Gastrocnemius medialis (tissue), 4 donors: ENCODE measurements at regions of chr22 and their contacts with region 1.

Region 1: DNA sequence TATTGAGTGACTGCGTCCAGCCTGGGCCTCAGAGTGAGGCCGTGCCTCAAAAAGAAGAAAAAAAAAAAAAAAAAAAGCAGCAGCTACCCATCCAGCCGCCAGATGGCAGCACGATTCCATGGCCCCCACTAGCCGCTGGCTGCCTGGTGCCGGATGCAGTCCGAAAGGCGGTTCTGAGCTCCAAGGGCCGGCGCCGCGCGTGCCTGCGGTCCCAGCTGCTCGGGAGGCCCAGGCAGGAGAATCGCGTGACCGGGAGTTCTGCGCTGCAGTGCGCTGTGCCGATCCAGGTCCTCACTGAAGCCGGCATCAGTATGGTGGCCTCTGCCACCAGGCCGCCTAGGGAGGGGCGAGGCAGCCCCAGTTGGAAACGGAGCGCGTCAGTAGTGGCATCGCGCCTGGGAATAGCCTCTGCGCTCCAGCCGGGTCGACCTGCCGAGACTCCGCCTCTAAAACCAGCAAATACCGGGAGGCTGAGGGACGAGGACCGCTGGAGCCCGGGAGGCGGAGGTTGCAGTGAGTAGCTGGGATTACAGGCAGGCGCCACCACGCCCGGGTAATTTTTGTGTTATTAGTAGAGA is 19.3 kb downstream of the SCARF2 start:
- DNase-seq: peak; percentile 66 to 71
- ATAC-seq: peak; percentile 78 to 83
- H3K4me3 ChIP-seq: peak overlapping the region; percentile 40 to 63 (median 46)
- H3K27ac ChIP-seq: peak overlapping the region in 2 of 4 donors; percentile 34 to 50
- H3K4me1 ChIP-seq: peaks cover 0 to 7% of the 10 kb centered on the region in 2 donors
- H3K27me3 ChIP-seq: no peaks in the 10 kb centered on the region
- CTCF ChIP-seq: peak; percentile 64 to 92 (median 88)
- POLR2A ChIP-seq: no peak

Region 2: GRCh38 chr22:20247010-20247505 is 171.2 kb before region 1 on chr22:
- in situ Hi-C with region 1: no loop called
- intact Hi-C with region 1: no loop called
- DNase-seq: peak in 1 of 2 donors; percentile 20
- ATAC-seq: peak in 1 of 2 donors; percentile 52
- H3K4me3 ChIP-seq: no peak overlapping the region
- H3K27ac ChIP-seq: no peak overlapping the region
- H3K4me1 ChIP-seq: peaks cover 5 to 9% of the 10 kb centered on the region in 2 donors
- H3K27me3 ChIP-seq: no peaks in the 10 kb centered on the region
- CTCF ChIP-seq: no peak
- POLR2A ChIP-seq: no peak

Region 3: GRCh38 chr22:20456064-20456721 is 37.9 kb after region 1 on chr22:
- in situ Hi-C with region 1: loop called in 2 of 4 experiments (anchors 5 to 10 kb)
- intact Hi-C with region 1: loop called (anchors 5 kb)
- DNase-seq: peak; percentile 37 to 62
- ATAC-seq: peak; percentile 67 to 85
- H3K4me3 ChIP-seq: no peak overlapping the region
- H3K27ac ChIP-seq: no peak overlapping the region
- H3K4me1 ChIP-seq: no peaks in the 10 kb centered on the region
- H3K27me3 ChIP-seq: no peaks in the 10 kb centered on the region
- CTCF ChIP-seq: peak; percentile 52 to 82 (median 77)
- POLR2A ChIP-seq: no peak

Region 4: GRCh38 chr22:20463324-20464095 is 45.2 kb after region 1 on chr22:
- in situ Hi-C with region 1: loop called in 2 of 4 experiments (anchors 5 to 10 kb)
- intact Hi-C with region 1: loop called (anchors 5 kb)
- DNase-seq: peak; percentile 19 to 60
- ATAC-seq: peak; percentile 79 to 88
- H3K4me3 ChIP-seq: no peak overlapping the region
- H3K27ac ChIP-seq: peak overlapping the region in 3 of 4 donors; percentile 36 to 58 (median 46)
- H3K4me1 ChIP-seq: peaks cover 13 to 17% of the 10 kb centered on the region in 2 donors
- H3K27me3 ChIP-seq: no peaks in the 10 kb centered on the region
- CTCF ChIP-seq: no peak
- POLR2A ChIP-seq: no peak

Region 5: DNA sequence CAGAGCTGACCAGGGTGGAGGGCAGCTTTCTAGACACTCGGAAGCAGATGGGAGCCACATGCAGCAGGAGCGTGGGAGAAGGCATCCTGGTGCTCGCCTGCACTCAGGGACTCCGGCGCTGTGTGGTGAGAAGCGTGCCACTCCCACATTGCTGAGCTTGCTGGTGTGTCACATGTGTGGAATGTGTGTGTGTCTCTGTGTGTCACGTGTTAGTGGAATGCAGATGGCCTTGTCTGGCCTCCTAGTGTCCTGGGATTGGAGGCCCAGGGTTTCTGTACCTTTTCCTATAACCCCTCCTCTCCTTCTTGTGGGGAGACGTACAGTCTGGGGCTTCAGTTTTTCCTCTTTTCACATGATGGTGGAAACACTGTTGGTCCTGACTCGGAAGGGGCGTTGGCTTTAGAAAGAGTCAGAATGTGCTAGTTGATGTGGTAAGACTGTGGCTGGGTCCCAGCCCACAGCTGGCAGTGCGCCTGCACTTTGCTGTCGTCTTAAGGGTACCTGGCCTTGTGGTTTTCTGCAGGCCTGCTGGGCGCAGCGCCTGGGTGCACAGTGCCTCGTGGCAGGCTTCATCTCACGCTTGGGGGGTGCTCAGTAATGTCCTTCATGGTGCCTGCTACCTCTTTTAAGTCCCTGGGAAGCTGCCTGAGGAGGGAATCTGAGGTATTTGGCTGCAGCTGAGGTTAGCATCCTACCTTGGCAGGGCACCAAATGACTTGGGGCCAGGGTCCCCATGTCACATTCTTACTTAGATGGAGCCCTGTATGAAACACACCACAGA is 150.9 kb after region 1 on chr22:
- in situ Hi-C with region 1: loop called in 1 of 4 experiments (anchors 10 kb)
- intact Hi-C with region 1: loop called (anchors 10 kb)
- DNase-seq: peak; percentile 81 to 88
- ATAC-seq: peak; percentile 89 to 93
- H3K4me3 ChIP-seq: no peak overlapping the region
- H3K27ac ChIP-seq: peak overlapping the region; percentile 69 to 87 (median 78)
- H3K4me1 ChIP-seq: peaks cover 12 to 20% of the 10 kb centered on the region in 2 donors
- H3K27me3 ChIP-seq: no peaks in the 10 kb centered on the region
- CTCF ChIP-seq: no peak
- POLR2A ChIP-seq: no peak

Region 6: GRCh38 chr22:20674998-20675397 is 256.7 kb after region 1 on chr22:
- in situ Hi-C with region 1: loop called in 2 of 4 experiments (anchors 25 kb)
- intact Hi-C with region 1: no loop called
- DNase-seq: no peak
- ATAC-seq: no peak
- H3K4me3 ChIP-seq: no peak overlapping the region
- H3K27ac ChIP-seq: no peak overlapping the region
- H3K4me1 ChIP-seq: no peaks in the 10 kb centered on the region
- H3K27me3 ChIP-seq: peaks cover 0 to 6% (median 5%) of the 10 kb centered on the region in 3 donors
- CTCF ChIP-seq: no peak
- POLR2A ChIP-seq: no peak